ENCODE measurements at regions of chr14 and their contacts with region 1.

Region 1: DNA sequence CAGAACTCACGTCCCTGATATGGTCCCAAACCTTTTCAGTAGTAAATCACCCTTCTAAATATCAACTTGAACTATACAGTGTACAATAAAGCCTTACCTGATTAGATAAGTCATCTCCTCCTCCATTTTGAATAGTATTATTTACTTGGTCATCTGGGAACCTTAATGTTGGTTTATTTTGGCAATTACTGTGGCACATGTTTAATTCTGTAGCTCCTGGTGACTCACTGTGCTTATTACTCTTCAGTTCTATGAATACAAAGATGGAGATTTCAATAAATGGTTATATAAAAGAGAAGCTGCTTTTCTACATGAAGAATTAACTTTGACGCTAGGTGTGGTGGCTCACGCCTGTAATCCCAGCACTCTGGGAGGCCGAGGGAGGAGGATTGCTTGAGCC is 25.4 kb downstream of the MIS18BP1 start:
- DNase-seq: no peak
- H3K4me3 ChIP-seq: no peak overlapping the region
- H3K27ac ChIP-seq: no peak overlapping the region
- H3K4me1 ChIP-seq: no peaks in the 10 kb centered on the region
- H3K27me3 ChIP-seq: no peaks in the 10 kb centered on the region
- CTCF ChIP-seq: no peak
- EP300 ChIP-seq: no peak
- POLR2A ChIP-seq: no peak

Region 2: DNA sequence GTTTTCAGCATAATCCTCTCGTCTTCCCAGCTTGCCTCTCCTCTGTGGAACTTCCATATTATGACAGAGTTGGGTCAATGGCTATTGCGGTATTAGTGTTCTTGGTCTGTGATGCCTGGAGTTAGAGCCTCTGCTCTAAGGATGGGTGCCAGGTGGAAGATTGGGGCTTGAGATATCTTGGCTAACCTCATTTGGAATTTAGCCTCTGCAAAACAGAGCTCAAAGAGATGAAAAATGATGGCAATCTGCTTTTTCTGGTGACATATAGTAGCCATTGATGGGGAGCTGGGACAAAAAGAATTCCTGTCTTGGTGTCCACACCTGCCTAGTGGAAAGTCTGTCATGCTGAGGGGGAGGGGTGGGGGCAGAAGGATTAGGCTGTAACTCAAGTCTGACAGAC is 1272.0 kb after region 1 on chr14:
- in situ Hi-C with region 1: no loop called
- intact Hi-C with region 1: loop called (anchors 5 kb)
- DNase-seq: no peak
- H3K4me3 ChIP-seq: no peak overlapping the region
- H3K27ac ChIP-seq: no peak overlapping the region
- H3K4me1 ChIP-seq: no peaks in the 10 kb centered on the region
- H3K27me3 ChIP-seq: no peaks in the 10 kb centered on the region
- CTCF ChIP-seq: no peak
- EP300 ChIP-seq: no peak
- POLR2A ChIP-seq: no peak